Psoas muscle (tissue), 8 donors: ENCODE measurements at regions of chr2 and their contacts with region 1.

Region 1: DNA sequence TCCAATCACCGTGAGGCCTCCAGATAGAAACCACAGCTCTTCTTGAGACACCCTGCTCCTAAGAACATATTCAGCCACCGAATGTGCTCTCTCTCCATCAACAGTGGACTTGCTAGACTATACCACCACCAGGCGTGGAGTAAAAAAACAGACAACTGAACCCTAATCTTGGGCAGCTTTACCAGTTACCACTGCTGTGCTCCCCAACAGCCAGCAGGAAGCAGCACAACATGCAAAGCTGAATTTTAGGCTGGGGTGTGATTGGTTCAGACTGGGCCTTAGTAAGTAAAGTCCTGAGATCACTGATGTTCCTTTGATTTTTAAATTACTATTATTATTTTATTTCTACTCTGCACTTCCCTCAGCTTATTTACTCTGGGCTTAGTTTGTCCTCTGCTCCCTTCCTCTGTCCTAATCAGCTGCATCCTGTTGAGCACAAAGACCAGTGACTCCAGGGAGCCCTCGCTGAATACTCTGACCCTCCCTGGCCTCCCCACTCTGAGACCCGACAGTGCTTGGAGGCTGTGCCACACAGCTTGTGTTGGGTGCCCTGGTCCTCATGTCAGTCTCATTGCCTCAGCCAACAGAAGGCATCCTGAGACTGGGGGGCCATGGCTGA is 21.9 kb downstream of the MRPL35 start:
- DNase-seq: peak in 1 of 2 donors; percentile 42
- ATAC-seq: peak; percentile 31 to 59 (median 44)
- H3K4me3 ChIP-seq: no peak overlapping the region
- H3K27ac ChIP-seq: no peak overlapping the region
- H3K4me1 ChIP-seq: peaks cover 43% of the 10 kb centered on the region
- H3K27me3 ChIP-seq: no peaks in the 10 kb centered on the region
- CTCF ChIP-seq: peak; percentile 93

Region 2: DNA sequence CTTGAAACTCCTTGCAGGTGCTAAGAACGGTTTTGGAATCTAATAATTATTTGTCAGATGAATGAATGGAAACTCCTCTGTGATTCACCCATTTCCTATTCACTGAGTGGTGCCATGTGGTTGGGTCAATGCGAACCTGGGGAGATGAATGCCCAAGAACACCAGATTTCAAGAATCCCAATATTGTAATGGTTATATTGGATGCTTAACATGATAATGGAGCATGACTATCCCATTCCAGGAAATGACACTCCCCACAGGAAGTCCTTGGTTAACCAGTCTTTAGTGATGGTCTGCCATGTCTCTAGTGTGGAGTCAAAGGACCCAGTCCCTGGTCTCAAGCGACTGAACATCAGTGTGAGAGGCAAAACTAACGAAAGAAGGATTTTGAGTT is 264.5 kb before region 1 on chr2:
- intact Hi-C with region 1: no loop called
- DNase-seq: no peak
- ATAC-seq: peak in 2 of 4 donors; percentile 14 to 28
- H3K4me3 ChIP-seq: no peak overlapping the region
- H3K27ac ChIP-seq: peak overlapping the region; percentile 65
- H3K4me1 ChIP-seq: peaks cover 25% of the 10 kb centered on the region
- H3K27me3 ChIP-seq: no peaks in the 10 kb centered on the region
- CTCF ChIP-seq: no peak

Region 3: DNA sequence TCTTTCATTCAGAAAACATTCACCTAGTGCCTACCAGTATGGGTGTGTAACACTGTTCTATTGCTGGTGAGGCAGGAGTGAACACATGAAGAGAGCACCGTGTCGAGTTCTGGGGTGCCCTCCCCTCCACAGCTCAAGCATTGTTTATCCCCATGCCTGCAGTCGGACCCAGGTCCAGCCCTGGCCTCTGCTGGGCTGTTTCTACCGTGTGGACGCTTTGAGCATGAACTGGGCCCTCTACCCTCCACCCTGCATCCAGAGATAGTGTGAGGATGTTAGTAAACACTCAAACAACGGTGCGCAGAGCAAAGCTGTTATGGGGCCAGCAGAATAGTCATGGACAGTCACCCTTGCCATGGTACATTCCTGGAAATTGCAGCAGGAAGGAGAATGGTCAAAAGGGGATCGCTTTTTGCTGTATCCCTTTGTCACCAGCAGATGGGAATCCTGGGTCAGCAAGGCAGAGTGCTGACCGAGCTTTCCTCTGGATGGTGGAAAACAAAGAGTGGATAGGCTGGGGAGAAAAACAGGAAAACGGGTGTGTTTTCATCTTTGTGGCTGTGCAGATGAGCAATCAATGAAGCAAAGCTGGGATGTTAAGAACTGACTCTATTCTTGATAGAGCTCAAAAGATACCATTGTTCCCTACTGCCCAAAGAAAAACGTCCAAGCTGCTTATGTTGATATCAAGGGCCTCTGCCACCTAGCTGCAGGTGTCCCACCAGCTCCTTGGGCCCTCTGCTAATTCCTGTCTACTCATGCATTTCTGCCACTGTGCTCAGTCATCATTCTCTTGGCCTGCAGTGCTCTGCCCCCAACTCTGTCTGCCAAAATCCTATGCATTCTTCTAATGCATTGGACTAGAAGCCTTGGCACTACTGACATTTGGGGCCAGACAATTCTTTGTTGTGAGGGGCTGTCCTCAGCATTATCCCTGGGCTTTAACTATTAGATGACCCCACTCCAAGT is 77.5 kb after region 1 on chr2:
- intact Hi-C with region 1: loop called in 1 of 2 experiments (anchors 5 kb)
- DNase-seq: no peak
- ATAC-seq: peak; percentile 42 to 82 (median 70)
- H3K4me3 ChIP-seq: no peak overlapping the region
- H3K27ac ChIP-seq: peak overlapping the region; percentile 24
- H3K4me1 ChIP-seq: peaks cover 51% of the 10 kb centered on the region
- H3K27me3 ChIP-seq: no peaks in the 10 kb centered on the region
- CTCF ChIP-seq: peak; percentile 34

Region 4: DNA sequence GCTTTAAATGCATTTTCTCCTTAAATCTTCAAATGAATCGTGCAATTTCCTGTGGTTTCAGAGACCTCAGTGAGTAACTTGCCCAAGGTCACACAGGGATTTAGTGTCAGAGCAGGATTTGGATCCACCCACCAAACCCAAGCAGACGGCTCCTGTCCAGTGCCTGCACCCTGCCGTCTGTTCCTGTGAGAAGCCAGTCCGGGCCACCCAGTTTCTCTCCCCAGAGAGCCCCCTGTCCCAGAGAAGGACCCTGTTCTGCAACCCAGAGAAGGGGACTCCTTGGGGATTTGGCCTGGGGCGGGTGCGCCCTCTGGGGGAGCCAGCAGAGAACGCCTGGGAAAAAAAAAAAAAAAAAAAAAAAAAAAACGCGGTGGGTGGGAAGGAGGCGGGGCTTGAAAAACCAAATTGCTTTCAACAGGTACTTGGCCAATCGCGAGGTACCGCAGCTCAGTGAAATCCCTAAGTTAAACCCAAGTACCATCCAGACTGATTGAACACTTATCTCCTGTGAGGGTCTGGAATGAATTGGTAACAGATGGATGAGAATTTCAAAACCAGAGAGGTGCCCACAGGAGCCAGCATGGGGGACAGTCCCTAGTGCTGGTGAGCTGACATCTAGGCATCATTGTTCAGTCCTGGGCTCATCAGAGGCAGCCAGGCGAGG is 147.1 kb after region 1 on chr2:
- intact Hi-C with region 1: loop called (anchors 1 to 2 kb)
- DNase-seq: peak; percentile 21 to 65
- ATAC-seq: peak; percentile 49 to 89 (median 70)
- H3K4me3 ChIP-seq: peak overlapping the region; percentile 20
- H3K27ac ChIP-seq: no peak overlapping the region
- H3K4me1 ChIP-seq: no peaks in the 10 kb centered on the region
- H3K27me3 ChIP-seq: no peaks in the 10 kb centered on the region
- CTCF ChIP-seq: peak; percentile 63

Region 5: GRCh38 chr2:86617153-86617552 is 396.0 kb after region 1 on chr2:
- intact Hi-C with region 1: loop called in 1 of 2 experiments (anchors 10 kb)
- DNase-seq: no peak
- ATAC-seq: no peak
- H3K4me3 ChIP-seq: no peak overlapping the region
- H3K27ac ChIP-seq: no peak overlapping the region
- H3K4me1 ChIP-seq: peaks cover 37% of the 10 kb centered on the region
- H3K27me3 ChIP-seq: no peaks in the 10 kb centered on the region
- CTCF ChIP-seq: no peak